ENCODE measurements at regions of chr12 and their contacts with region 1.

Region 1: DNA sequence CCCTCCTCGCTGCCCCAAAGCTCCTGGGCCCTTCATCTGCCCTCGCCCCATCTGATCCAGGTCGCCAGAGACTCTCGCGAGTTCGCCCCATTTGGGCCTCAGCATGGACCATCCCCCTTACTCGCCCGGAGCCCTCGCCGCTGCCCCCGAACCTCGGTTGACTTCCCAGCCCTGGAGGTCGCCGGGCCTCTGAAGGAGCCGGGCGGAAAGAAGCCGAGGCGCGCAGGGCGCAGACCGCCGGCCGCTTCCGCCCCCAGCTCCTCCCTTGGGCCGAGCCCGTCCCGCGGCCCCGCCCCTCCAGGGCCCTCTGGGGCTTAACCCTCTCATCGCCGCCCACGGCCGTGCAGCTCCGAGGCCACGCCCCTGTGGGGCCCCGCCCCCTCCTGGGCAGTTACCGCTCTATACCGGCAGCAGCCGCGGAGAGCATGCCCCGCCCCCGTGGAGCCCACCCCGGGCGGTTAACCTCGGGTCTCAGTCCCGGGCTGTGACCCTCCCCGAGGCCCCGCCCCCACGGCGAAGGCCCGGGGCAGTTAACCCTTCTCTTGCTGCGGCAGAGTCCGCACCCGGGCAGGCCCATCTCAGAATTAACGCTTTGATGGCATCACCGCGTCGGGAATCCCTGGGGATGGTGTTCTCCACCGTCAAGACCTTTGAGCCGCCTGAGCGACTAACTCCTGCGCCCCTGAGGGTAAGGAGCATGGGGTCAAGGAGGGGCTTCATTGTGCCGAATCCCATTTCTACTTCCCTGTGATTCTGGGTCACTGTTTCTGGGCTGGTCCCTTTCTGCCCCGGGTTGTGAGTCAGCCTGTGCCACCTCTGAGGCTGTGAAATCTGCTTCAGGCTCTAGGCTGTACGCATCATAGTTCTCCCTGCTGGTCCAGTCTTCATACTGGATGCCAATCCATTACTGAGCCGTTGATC is at the start of gene SPSB2:
- DNase-seq: peak; percentile 98 to 100 (median 99)
- H3K4me3 ChIP-seq: peak within 1 kb of the TSS; percentile 96
- H3K4me3 Mint-ChIP-seq: peak within 1 kb of the TSS; percentile 83 to 97 (median 89)
- H3K27ac ChIP-seq: peak within 1 kb of the TSS; percentile 90
- H3K27ac Mint-ChIP-seq: peak within 1 kb of the TSS; percentile 85 to 99 (median 92)
- H3K4me1 ChIP-seq: peaks cover 40% of the 10 kb centered on the region
- H3K4me1 Mint-ChIP-seq: peaks cover 41 to 53% (median 52%) of the 10 kb centered on the region in 3 donors
- H3K27me3 ChIP-seq: no peaks in the 10 kb centered on the region
- H3K27me3 Mint-ChIP-seq: no peaks in the 10 kb centered on the region
- total RNA-seq, gene SPSB2: 7.7 to 8.1 TPM

Region 2: GRCh38 chr12:6752921-6753771 is 120.2 kb before region 1 on chr12 and contains the start of gene MLF2:
- CTCF ChIA-PET with region 1: interaction called, 12 read pairs
- POLR2A ChIA-PET with region 1: interaction called, 5 read pairs
- DNase-seq: peak; percentile 96 to 98 (median 97)
- H3K4me3 ChIP-seq: peak within 1 kb of the TSS; percentile 99
- H3K4me3 Mint-ChIP-seq: peak within 1 kb of the TSS; percentile 96 to 99 (median 97)
- H3K27ac ChIP-seq: peak within 1 kb of the TSS; percentile 98
- H3K27ac Mint-ChIP-seq: peak within 1 kb of the TSS; percentile 98 to 100 (median 99)
- H3K4me1 ChIP-seq: peaks cover 22% of the 10 kb centered on the region
- H3K4me1 Mint-ChIP-seq: peaks cover 24 to 30% (median 29%) of the 10 kb centered on the region in 3 donors
- H3K27me3 ChIP-seq: no peaks in the 10 kb centered on the region
- H3K27me3 Mint-ChIP-seq: no peaks in the 10 kb centered on the region
- total RNA-seq, gene MLF2: 141 to 146 TPM

Region 3: GRCh38 chr12:6851921-6852650 is 21.3 kb before region 1 on chr12 and contains the start of gene USP5:
- CTCF ChIA-PET with region 1: interaction called, 128 read pairs
- POLR2A ChIA-PET with region 1: interaction called, 46 read pairs
- DNase-seq: peak; percentile 97 to 99 (median 99)
- H3K4me3 ChIP-seq: peak within 1 kb of the TSS; percentile 97
- H3K4me3 Mint-ChIP-seq: peak within 1 kb of the TSS; percentile 86 to 99 (median 94)
- H3K27ac ChIP-seq: peak within 1 kb of the TSS; percentile 77
- H3K27ac Mint-ChIP-seq: peak within 1 kb of the TSS; percentile 99 to 100 (median 100)
- H3K4me1 ChIP-seq: peaks cover 18% of the 10 kb centered on the region
- H3K4me1 Mint-ChIP-seq: peaks cover 20 to 38% (median 20%) of the 10 kb centered on the region in 3 donors
- H3K27me3 ChIP-seq: no peaks in the 10 kb centered on the region
- H3K27me3 Mint-ChIP-seq: no peaks in the 10 kb centered on the region
- total RNA-seq, gene USP5: 154 TPM

Region 4: GRCh38 chr12:6890789-6891645 is 17.7 kb after region 1 on chr12:
- CTCF ChIA-PET with region 1: interaction called, 135 read pairs
- POLR2A ChIA-PET with region 1: interaction called, 34 read pairs
- DNase-seq: peak; percentile 97 to 100 (median 99)
- H3K4me3 ChIP-seq: peak overlapping the region; percentile 95
- H3K4me3 Mint-ChIP-seq: peak overlapping the region; percentile 81 to 93 (median 84)
- H3K27ac ChIP-seq: peak overlapping the region; percentile 92
- H3K27ac Mint-ChIP-seq: peak overlapping the region; percentile 89 to 98 (median 94)
- H3K4me1 ChIP-seq: peaks cover 12% of the 10 kb centered on the region
- H3K4me1 Mint-ChIP-seq: peaks cover 12 to 19% (median 12%) of the 10 kb centered on the region in 3 donors
- H3K27me3 ChIP-seq: no peaks in the 10 kb centered on the region
- H3K27me3 Mint-ChIP-seq: peaks cover 0 to 3% of the 10 kb centered on the region in 2 donors

Region 5: DNA sequence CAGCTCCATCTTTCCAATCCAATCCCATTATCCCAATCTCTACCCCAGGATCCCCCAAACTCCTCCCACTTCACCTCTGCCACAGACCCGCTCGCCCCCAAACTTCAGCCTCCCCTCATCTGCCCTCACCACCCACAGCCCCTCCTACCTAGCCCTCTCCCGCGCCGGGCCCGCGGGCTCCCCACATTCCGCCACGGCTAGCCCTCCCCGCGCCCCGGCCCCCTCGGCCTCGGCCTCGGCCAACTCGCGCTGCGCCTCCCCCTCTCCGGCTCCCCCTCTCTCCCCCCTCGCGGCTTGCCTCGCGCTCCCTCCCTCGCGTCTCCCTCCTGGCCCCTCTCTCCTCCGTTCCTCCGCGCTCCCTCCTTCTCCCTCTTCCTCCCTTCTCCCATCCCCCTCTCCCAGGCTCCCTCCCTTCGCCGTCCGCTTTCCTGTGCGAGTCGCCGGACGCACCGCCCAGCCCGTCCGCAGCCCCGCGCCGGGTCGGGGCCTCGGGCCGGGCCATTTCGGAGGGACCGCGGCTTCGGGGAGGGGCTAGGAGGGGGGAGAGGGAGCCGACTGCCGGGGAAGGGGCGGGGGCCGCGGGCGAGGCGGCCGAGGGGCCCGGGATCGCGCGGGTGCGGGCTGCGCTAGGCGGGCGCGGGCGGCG is 54.1 kb after region 1 on chr12 and contains the start of gene ATN1:
- CTCF ChIA-PET with region 1: interaction called, 73 read pairs
- POLR2A ChIA-PET with region 1: interaction called, 3 read pairs
- DNase-seq: peak; percentile 27 to 68 (median 38)
- H3K4me3 ChIP-seq: peak within 1 kb of the TSS; percentile 59
- H3K4me3 Mint-ChIP-seq: peak within 1 kb of the TSS; percentile 82 to 97 (median 92)
- H3K27ac ChIP-seq: peak within 1 kb of the TSS; percentile 65
- H3K27ac Mint-ChIP-seq: peak within 1 kb of the TSS; percentile 68 to 99 (median 93)
- H3K4me1 ChIP-seq: peaks cover 48% of the 10 kb centered on the region
- H3K4me1 Mint-ChIP-seq: peaks cover 32 to 57% (median 46%) of the 10 kb centered on the region in 3 donors
- H3K27me3 ChIP-seq: no peaks in the 10 kb centered on the region
- H3K27me3 Mint-ChIP-seq: no peaks in the 10 kb centered on the region
- total RNA-seq, gene ATN1: 54.8 to 60.4 TPM

Region 6: DNA sequence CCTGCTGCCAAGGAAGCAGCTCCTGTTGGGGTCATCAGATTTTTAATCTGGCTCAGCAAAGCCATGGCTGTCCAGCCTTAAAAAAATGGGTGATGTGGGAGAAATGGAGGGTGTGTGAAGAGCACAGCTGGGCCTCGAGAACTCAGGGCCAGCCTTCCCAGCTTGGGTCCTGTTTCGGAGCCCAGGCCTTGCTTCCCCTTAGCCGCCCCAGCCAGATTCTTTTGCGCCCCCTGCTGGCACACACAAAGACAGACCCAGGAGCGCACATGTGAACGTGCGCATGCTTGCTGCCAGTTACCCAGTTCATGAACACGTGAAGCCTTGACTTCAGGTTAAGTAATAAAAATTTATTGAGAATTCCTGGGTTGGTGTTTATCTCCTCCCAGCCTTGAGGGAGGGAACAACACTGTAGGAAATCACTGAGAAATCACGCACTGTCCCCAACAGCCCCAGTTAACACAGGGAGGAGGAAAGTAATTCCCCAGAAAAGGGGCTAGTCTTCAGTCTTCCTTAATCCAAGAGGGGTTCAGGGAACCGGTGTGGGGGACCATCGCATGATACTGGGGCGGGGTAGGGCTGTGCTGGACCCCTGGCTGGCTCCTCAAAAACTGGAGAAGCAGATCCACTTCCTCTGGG is 91.8 kb after region 1 on chr12:
- CTCF ChIA-PET with region 1: interaction called, 36 read pairs
- POLR2A ChIA-PET with region 1: interaction called, 10 read pairs
- DNase-seq: peak; percentile 79 to 90 (median 84)
- H3K4me3 ChIP-seq: no peak overlapping the region
- H3K4me3 Mint-ChIP-seq: peak overlapping the region in 2 of 7 donors; percentile 38 to 84
- H3K27ac ChIP-seq: no peak overlapping the region
- H3K27ac Mint-ChIP-seq: peak overlapping the region; percentile 85 to 98 (median 90)
- H3K4me1 ChIP-seq: peaks cover 59% of the 10 kb centered on the region
- H3K4me1 Mint-ChIP-seq: peaks cover 43 to 60% (median 59%) of the 10 kb centered on the region in 3 donors
- H3K27me3 ChIP-seq: no peaks in the 10 kb centered on the region
- H3K27me3 Mint-ChIP-seq: no peaks in the 10 kb centered on the region